ENCODE measurements at regions of chr2 and their contacts with region 1.

Region 1: GRCh38 chr2:230472621-230473018 is 56.6 kb downstream of the SP100 start:
- DNase-seq: no peak
- ATAC-seq: peak; percentile 50
- H3K4me3 ChIP-seq: no peak overlapping the region
- H3K4me3 Mint-ChIP-seq: peak overlapping the region; percentile 24
- H3K27ac ChIP-seq: peak overlapping the region; percentile 46 to 81
- H3K27ac Mint-ChIP-seq: peak overlapping the region; percentile 86
- H3K4me1 ChIP-seq: peaks cover 46 to 50% of the 10 kb centered on the region in 2 donors
- H3K4me1 Mint-ChIP-seq: peaks cover 50% of the 10 kb centered on the region
- H3K27me3 ChIP-seq: no peaks in the 10 kb centered on the region
- H3K27me3 Mint-ChIP-seq: no peaks in the 10 kb centered on the region
- CTCF ChIP-seq: no peak

Region 2: DNA sequence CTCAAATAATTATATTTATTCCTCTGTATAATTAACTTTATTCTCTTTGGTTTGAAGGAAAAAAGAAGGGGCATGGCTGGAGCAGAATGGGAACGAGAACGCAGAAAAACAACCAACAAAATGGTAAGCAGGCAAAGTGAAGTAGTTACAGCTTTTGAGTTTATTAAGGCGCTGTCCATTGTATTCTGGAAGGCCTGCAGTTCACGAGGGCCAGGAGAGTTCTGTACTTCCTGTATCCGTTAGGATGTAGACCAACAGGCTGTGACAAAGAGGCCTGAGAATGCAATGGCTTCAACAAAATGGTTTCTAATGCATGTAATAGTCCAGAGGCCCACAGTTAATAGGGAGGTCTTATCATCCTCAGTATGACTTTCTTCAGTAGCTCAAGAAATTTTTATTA is 89.2 kb before region 1 on chr2:
- CTCF ChIA-PET with region 1: no interaction called
- POLR2A ChIA-PET with region 1: no interaction called
- intact Hi-C with region 1: no loop called
- DNase-seq: no peak
- ATAC-seq: no peak
- H3K4me3 ChIP-seq: no peak overlapping the region
- H3K4me3 Mint-ChIP-seq: no peak overlapping the region
- H3K27ac ChIP-seq: no peak overlapping the region
- H3K27ac Mint-ChIP-seq: no peak overlapping the region
- H3K4me1 ChIP-seq: no peaks in the 10 kb centered on the region
- H3K4me1 Mint-ChIP-seq: peaks cover 3% of the 10 kb centered on the region
- H3K27me3 ChIP-seq: no peaks in the 10 kb centered on the region
- H3K27me3 Mint-ChIP-seq: no peaks in the 10 kb centered on the region
- CTCF ChIP-seq: no peak

Region 3: GRCh38 chr2:230457073-230457768 is 15.4 kb before region 1 on chr2:
- CTCF ChIA-PET with region 1: interaction called, 4 read pairs
- POLR2A ChIA-PET with region 1: interaction called, 5 read pairs
- intact Hi-C with region 1: loop called (anchors 2 kb)
- DNase-seq: peak; percentile 60
- ATAC-seq: peak; percentile 74
- H3K4me3 ChIP-seq: peak overlapping the region in 1 of 5 experiments; percentile 14
- H3K4me3 Mint-ChIP-seq: peak overlapping the region; percentile 67
- H3K27ac ChIP-seq: peak overlapping the region; percentile 29 to 80
- H3K27ac Mint-ChIP-seq: peak overlapping the region; percentile 89
- H3K4me1 ChIP-seq: peaks cover 33 to 61% of the 10 kb centered on the region in 2 donors
- H3K4me1 Mint-ChIP-seq: peaks cover 73% of the 10 kb centered on the region
- H3K27me3 ChIP-seq: no peaks in the 10 kb centered on the region
- H3K27me3 Mint-ChIP-seq: no peaks in the 10 kb centered on the region
- CTCF ChIP-seq: no peak

Region 4: GRCh38 chr2:230496891-230497290 is 24.3 kb after region 1 on chr2:
- CTCF ChIA-PET with region 1: interaction called, 7 read pairs
- POLR2A ChIA-PET with region 1: interaction called, 5 read pairs
- intact Hi-C with region 1: loop called (anchors 2 kb)
- DNase-seq: peak; percentile 32
- ATAC-seq: peak; percentile 68
- H3K4me3 ChIP-seq: peak overlapping the region in 2 of 5 experiments; percentile 19 to 57
- H3K4me3 Mint-ChIP-seq: peak overlapping the region; percentile 85
- H3K27ac ChIP-seq: peak overlapping the region; percentile 67 to 83
- H3K27ac Mint-ChIP-seq: peak overlapping the region; percentile 97
- H3K4me1 ChIP-seq: peaks cover 28 to 37% of the 10 kb centered on the region in 2 donors
- H3K4me1 Mint-ChIP-seq: peaks cover 58% of the 10 kb centered on the region
- H3K27me3 ChIP-seq: no peaks in the 10 kb centered on the region
- H3K27me3 Mint-ChIP-seq: no peaks in the 10 kb centered on the region
- CTCF ChIP-seq: no peak

Region 5: DNA sequence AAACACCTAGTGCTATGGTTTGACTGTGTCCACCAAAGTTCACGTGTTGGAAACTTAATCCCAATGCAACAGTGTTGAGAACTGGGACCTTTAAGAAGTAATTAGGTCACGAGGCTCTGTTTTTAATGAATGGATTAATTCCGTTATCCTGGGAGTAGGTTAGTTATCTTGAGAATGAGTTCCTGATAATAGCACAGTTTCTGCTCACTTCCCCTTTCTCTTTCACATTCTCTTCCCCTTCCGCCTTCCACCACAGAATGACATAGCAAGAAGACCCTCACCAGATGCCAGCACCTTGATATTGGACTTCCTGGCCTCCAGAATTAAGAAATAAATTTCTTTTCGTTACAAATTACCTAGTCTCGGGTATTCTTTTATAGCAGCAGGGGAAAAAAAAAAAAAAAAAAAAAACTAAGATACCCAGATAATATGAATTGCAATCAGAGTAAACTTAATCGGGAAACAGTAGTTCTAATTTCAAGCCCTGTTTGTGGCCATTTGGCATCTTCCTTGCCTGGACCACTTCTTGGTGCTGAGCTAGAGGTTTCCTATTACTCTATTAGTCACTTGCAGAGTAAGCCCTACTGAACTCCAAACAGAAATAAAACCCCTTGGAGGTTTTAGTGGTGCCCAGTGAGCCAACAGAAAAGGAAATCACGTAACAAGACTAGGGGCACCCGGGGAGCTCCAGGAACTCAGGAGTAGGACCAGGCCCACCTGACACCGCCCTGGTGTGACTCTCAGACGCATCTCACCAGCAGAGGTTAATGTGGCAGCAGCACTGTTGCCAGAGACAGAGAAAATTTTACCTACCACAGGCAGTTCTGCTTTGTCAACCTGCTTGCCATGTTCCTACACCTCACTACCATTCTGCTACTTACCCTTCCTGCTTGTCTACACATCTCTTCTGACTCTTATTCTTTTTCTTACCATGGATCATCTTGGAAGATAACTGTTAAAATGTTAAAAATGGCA is 92.5 kb after region 1 on chr2:
- CTCF ChIA-PET with region 1: no interaction called
- POLR2A ChIA-PET with region 1: no interaction called
- intact Hi-C with region 1: no loop called
- DNase-seq: peak; percentile 81
- ATAC-seq: peak; percentile 86
- H3K4me3 ChIP-seq: peak overlapping the region in 3 of 5 experiments; percentile 19 to 48 (median 34)
- H3K4me3 Mint-ChIP-seq: peak overlapping the region; percentile 52
- H3K27ac ChIP-seq: peak overlapping the region; percentile 63 to 65
- H3K27ac Mint-ChIP-seq: peak overlapping the region; percentile 57
- H3K4me1 ChIP-seq: peaks cover 14 to 23% of the 10 kb centered on the region in 2 donors
- H3K4me1 Mint-ChIP-seq: peaks cover 25% of the 10 kb centered on the region
- H3K27me3 ChIP-seq: no peaks in the 10 kb centered on the region
- H3K27me3 Mint-ChIP-seq: no peaks in the 10 kb centered on the region
- CTCF ChIP-seq: no peak

Measured in B cell (primary cell).